ENCODE measurements at regions of chr6 and their contacts with region 1.

Region 1: DNA sequence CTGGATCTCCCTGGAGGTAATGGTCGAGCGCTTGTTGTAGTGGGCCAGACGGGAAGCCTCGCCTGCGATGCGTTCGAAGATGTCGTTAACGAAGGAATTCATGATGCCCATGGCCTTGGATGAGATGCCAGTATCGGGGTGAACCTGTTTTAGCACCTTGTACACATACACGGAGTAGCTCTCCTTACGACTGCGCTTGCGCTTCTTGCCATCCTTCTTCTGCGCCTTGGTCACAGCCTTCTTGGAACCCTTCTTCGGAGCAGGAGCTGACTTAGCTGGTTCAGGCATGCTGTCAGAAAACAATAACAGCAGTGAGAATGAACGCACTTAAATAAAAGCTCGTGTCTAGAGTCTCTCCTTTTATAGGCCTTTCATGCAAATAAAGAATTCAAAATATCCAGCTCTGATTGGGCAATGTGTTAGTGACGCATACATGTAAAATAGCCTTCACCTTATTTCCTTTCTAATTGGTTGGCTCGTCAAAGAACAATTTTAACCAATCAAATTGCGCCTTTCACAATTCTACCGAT is 129.2 kb downstream of the HFE start:
- DNase-seq: peak; percentile 52 to 98 (median 71)
- ATAC-seq: peak; percentile 80
- H3K4me3 ChIP-seq: peak overlapping the region; percentile 76
- H3K4me3 Mint-ChIP-seq: no peak overlapping the region
- H3K27ac ChIP-seq: peak overlapping the region; percentile 87 to 88
- H3K27ac Mint-ChIP-seq: no peak overlapping the region
- H3K4me1 ChIP-seq: peaks cover 33% of the 10 kb centered on the region
- H3K4me1 Mint-ChIP-seq: no peaks in the 10 kb centered on the region
- H3K27me3 ChIP-seq: no peaks in the 10 kb centered on the region
- H3K27me3 Mint-ChIP-seq: no peaks in the 10 kb centered on the region
- CTCF ChIP-seq: no peak

Region 2: GRCh38 chr6:26103770-26104456 is 112.5 kb before region 1 on chr6:
- CTCF ChIA-PET with region 1: no interaction called
- POLR2A ChIA-PET with region 1: interaction called, 48 read pairs
- intact Hi-C with region 1: loop called in 1 of 2 experiments (anchors 1 kb)
- DNase-seq: peak; percentile 84 to 96 (median 90)
- ATAC-seq: peak; percentile 88
- H3K4me3 ChIP-seq: peak overlapping the region; percentile 58
- H3K4me3 Mint-ChIP-seq: peak overlapping the region; percentile 94
- H3K27ac ChIP-seq: peak overlapping the region; percentile 83 to 85
- H3K27ac Mint-ChIP-seq: peak overlapping the region; percentile 99
- H3K4me1 ChIP-seq: peaks cover 16% of the 10 kb centered on the region
- H3K4me1 Mint-ChIP-seq: peaks cover 13% of the 10 kb centered on the region
- H3K27me3 ChIP-seq: no peaks in the 10 kb centered on the region
- H3K27me3 Mint-ChIP-seq: peaks cover 5% of the 10 kb centered on the region
- CTCF ChIP-seq: peak; percentile 58

Region 3: GRCh38 chr6:26196846-26197648 is 19.4 kb before region 1 on chr6:
- CTCF ChIA-PET with region 1: interaction called, 28 read pairs
- POLR2A ChIA-PET with region 1: interaction called, 1,838 read pairs
- intact Hi-C with region 1: loop called (anchors 1 to 2 kb)
- DNase-seq: peak; percentile 60 to 97 (median 70)
- ATAC-seq: peak; percentile 55
- H3K4me3 ChIP-seq: peak overlapping the region; percentile 75
- H3K4me3 Mint-ChIP-seq: peak overlapping the region; percentile 94
- H3K27ac ChIP-seq: peak overlapping the region; percentile 81 to 87
- H3K27ac Mint-ChIP-seq: peak overlapping the region; percentile 97
- H3K4me1 ChIP-seq: peaks cover 26% of the 10 kb centered on the region
- H3K4me1 Mint-ChIP-seq: peaks cover 57% of the 10 kb centered on the region
- H3K27me3 ChIP-seq: no peaks in the 10 kb centered on the region
- H3K27me3 Mint-ChIP-seq: no peaks in the 10 kb centered on the region
- CTCF ChIP-seq: no peak

Region 4: GRCh38 chr6:26270903-26271667 is 54.7 kb after region 1 on chr6:
- CTCF ChIA-PET with region 1: interaction called, 10 read pairs
- POLR2A ChIA-PET with region 1: interaction called, 355 read pairs
- intact Hi-C with region 1: loop called (anchors 5 kb)
- DNase-seq: peak; percentile 60 to 92 (median 75)
- ATAC-seq: peak; percentile 25
- H3K4me3 ChIP-seq: peak overlapping the region; percentile 59
- H3K4me3 Mint-ChIP-seq: no peak overlapping the region
- H3K27ac ChIP-seq: peak overlapping the region; percentile 82 to 84
- H3K27ac Mint-ChIP-seq: no peak overlapping the region
- H3K4me1 ChIP-seq: peaks cover 28% of the 10 kb centered on the region
- H3K4me1 Mint-ChIP-seq: peaks cover 7% of the 10 kb centered on the region
- H3K27me3 ChIP-seq: no peaks in the 10 kb centered on the region
- H3K27me3 Mint-ChIP-seq: no peaks in the 10 kb centered on the region
- CTCF ChIP-seq: no peak

Region 5: GRCh38 chr6:26347699-26348098 is 131.3 kb after region 1 on chr6:
- CTCF ChIA-PET with region 1: no interaction called
- POLR2A ChIA-PET with region 1: no interaction called
- intact Hi-C with region 1: no loop called
- DNase-seq: no peak
- ATAC-seq: no peak
- H3K4me3 ChIP-seq: no peak overlapping the region
- H3K4me3 Mint-ChIP-seq: no peak overlapping the region
- H3K27ac ChIP-seq: no peak overlapping the region
- H3K27ac Mint-ChIP-seq: no peak overlapping the region
- H3K4me1 ChIP-seq: no peaks in the 10 kb centered on the region
- H3K4me1 Mint-ChIP-seq: no peaks in the 10 kb centered on the region
- H3K27me3 ChIP-seq: no peaks in the 10 kb centered on the region
- H3K27me3 Mint-ChIP-seq: no peaks in the 10 kb centered on the region
- CTCF ChIP-seq: no peak

Region 6: DNA sequence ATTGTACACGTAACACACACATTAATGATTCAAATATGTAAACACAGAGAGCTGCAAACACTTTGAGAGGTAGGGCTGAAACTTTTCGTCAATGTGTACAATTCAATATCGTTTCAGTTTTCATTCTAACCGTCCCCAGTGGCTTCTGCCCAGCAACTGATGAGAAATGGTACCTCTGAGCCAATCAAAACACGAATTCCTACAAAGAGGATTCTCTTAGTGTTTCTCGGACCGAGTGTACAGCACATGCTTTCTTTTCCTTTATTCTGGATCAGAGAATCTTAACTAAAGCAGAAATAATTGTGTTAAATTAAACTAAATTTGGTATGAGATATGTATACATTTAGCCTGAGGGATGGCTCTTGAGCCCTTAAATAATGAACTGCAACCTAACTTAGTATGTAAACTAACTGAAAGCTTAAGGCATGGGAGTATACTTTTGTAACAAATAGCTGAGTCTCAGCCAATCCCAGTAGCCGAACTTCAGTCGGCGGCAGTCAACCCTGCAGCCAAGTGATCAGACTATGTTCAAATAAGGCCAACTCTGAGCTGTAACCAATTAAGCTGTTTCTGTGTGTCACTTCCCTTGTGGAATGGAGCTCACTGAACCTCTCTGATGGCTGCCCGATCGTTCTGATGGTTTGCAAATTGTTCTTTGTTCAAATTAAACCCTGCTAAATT is 257.5 kb after region 1 on chr6:
- CTCF ChIA-PET with region 1: no interaction called
- POLR2A ChIA-PET with region 1: interaction called, 14 read pairs
- intact Hi-C with region 1: no loop called
- DNase-seq: peak; percentile 60 to 96 (median 76)
- ATAC-seq: peak; percentile 91
- H3K4me3 ChIP-seq: peak overlapping the region; percentile 56
- H3K4me3 Mint-ChIP-seq: peak overlapping the region; percentile 94
- H3K27ac ChIP-seq: peak overlapping the region; percentile 85 to 90
- H3K27ac Mint-ChIP-seq: peak overlapping the region; percentile 99
- H3K4me1 ChIP-seq: peaks cover 45% of the 10 kb centered on the region
- H3K4me1 Mint-ChIP-seq: peaks cover 64% of the 10 kb centered on the region
- H3K27me3 ChIP-seq: no peaks in the 10 kb centered on the region
- H3K27me3 Mint-ChIP-seq: no peaks in the 10 kb centered on the region
- CTCF ChIP-seq: no peak

Region 7: DNA sequence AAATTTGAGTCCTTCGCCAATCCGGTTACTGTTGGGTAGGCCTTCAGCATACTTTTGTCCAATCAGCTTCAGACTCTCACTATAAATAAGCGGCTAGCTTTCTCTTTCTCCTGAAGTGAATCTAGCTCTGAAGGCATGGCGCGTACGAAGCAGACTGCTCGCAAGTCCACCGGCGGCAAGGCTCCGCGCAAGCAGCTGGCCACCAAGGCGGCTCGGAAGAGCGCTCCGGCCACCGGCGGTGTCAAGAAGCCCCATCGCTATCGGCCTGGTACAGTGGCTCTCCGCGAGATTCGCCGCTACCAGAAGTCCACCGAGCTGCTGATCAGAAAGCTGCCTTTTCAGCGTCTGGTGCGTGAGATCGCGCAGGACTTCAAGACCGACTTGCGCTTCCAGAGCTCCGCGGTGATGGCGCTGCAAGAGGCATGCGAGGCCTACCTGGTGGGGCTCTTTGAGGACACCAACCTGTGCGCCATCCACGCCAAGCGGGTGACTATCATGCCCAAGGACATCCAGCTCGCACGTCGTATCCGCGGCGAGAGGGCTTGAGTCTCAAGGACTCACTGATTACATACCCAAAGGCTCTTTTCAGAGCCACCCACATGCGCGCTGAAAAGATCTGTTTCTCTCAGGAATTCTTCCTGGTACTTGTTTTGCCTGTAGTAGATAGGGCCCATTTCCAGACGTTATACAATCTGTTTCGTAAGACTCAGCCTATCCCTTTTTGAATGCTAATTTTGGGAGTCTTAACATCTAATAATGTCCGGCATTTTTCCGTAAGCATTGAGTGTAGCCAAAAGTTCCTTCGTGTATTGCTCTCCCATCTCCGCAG is 1593.7 kb after region 1 on chr6:
- CTCF ChIA-PET with region 1: no interaction called
- POLR2A ChIA-PET with region 1: interaction called, 37 read pairs
- intact Hi-C with region 1: no loop called
- DNase-seq: peak; percentile 63 to 98 (median 75)
- ATAC-seq: peak; percentile 61
- H3K4me3 ChIP-seq: peak overlapping the region; percentile 64
- H3K4me3 Mint-ChIP-seq: peak overlapping the region; percentile 95
- H3K27ac ChIP-seq: peak overlapping the region; percentile 69 to 81
- H3K27ac Mint-ChIP-seq: peak overlapping the region; percentile 96
- H3K4me1 ChIP-seq: peaks cover 39% of the 10 kb centered on the region
- H3K4me1 Mint-ChIP-seq: peaks cover 68% of the 10 kb centered on the region
- H3K27me3 ChIP-seq: no peaks in the 10 kb centered on the region
- H3K27me3 Mint-ChIP-seq: no peaks in the 10 kb centered on the region
- CTCF ChIP-seq: no peak

Measured in CD4-positive, alpha-beta T cell (primary cell).